Ascending aorta (tissue), 2 donors: ENCODE measurements at regions of chr5 and their contacts with region 1.

Region 1: GRCh38 chr5:140690941-140691924 is at the starts of genes HARS1 and HARS2:
- DNase-seq: peak; percentile 58 to 94
- H3K4me3 ChIP-seq: peak within 1 kb of the TSS; percentile 60 to 86
- H3K27ac ChIP-seq: peak within 1 kb of the TSS; percentile 76 to 81
- H3K4me1 ChIP-seq: peaks cover 4 to 25% of the 10 kb centered on the region in 2 donors
- H3K27me3 ChIP-seq: no peaks in the 10 kb centered on the region
- CTCF ChIP-seq: peak in 1 of 3 experiments; percentile 12
- total RNA-seq, gene HARS1: 68.6 TPM
- total RNA-seq, gene HARS2: 10.7 TPM

Region 2: GRCh38 chr5:140647042-140647341 is 44.2 kb before region 1 on chr5:
- intact Hi-C with region 1: loop called (anchors 5 kb)
- DNase-seq: peak in 1 of 2 donors; percentile 61
- H3K4me3 ChIP-seq: peak overlapping the region; percentile 88 to 90
- H3K27ac ChIP-seq: peak overlapping the region; percentile 79 to 83
- H3K4me1 ChIP-seq: peaks cover 12 to 14% of the 10 kb centered on the region in 2 donors
- H3K27me3 ChIP-seq: no peaks in the 10 kb centered on the region
- CTCF ChIP-seq: no peak